ENCODE measurements at regions of chr7 and their contacts with region 1.

Region 1: GRCh38 chr7:100478966-100479665 is at the start of gene TSC22D4:
- DNase-seq: peak; percentile 97
- H3K4me3 ChIP-seq: peak within 1 kb of the TSS; percentile 71 to 99
- H3K27ac ChIP-seq: peak within 1 kb of the TSS; percentile 76 to 78
- H3K4me1 ChIP-seq: peaks cover 16 to 27% of the 10 kb centered on the region in 2 experiments; a peak in 3 of 4 replicates
- H3K27me3 ChIP-seq: no peaks in the 10 kb centered on the region
- CTCF ChIP-seq: no peak
- EP300 ChIP-seq: peak in 1 of 2 experiments; percentile 25; a peak in 1 of 4 replicates
- RAD21 ChIP-seq: no peak
- polyA plus RNA-seq, gene TSC22D4: 20.3 and 32.7 TPM in 2 replicates

Region 2: DNA sequence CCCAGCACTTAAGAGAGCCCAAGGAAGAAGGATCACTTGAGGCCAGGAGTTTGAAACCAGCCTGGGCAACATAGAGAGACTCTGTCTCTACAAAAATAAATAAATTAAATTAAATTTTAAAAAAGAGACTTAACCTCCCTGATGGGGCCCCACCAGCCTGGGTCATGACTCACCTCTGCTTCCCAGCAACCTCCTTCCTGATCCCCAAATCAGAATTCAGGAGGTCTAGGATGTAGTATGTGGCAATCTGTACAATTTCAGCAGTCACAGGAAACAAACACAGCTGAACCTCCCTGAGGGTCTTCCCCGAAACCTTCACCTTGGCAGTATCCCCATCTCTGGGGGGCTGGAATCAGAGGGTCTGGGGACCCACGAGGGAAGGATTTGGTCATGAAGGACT is 33.1 kb before region 1 on chr7:
- CTCF ChIA-PET with region 1: interaction called, 21 read pairs
- POLR2A ChIA-PET with region 1: no interaction called
- DNase-seq: no peak
- H3K4me3 ChIP-seq: no peak overlapping the region
- H3K27ac ChIP-seq: peak overlapping the region in 1 of 2 experiments; percentile 36; a peak in 2 of 4 replicates
- H3K4me1 ChIP-seq: peaks cover 2 to 4% of the 10 kb centered on the region in 2 experiments; a peak in 2 of 4 replicates
- H3K27me3 ChIP-seq: no peaks in the 10 kb centered on the region
- CTCF ChIP-seq: no peak
- EP300 ChIP-seq: no peak
- RAD21 ChIP-seq: no peak

Region 3: GRCh38 chr7:100489824-100490223 is 10.7 kb after region 1 on chr7:
- CTCF ChIA-PET with region 1: interaction called, 12 read pairs
- POLR2A ChIA-PET with region 1: interaction called, 7 read pairs
- DNase-seq: peak; percentile 100
- H3K4me3 ChIP-seq: no peak overlapping the region
- H3K27ac ChIP-seq: peak overlapping the region in 1 of 2 experiments; percentile 78; a peak in 2 of 4 replicates
- H3K4me1 ChIP-seq: peaks cover 3 to 32% of the 10 kb centered on the region in 2 experiments; a peak in 2 of 4 replicates
- H3K27me3 ChIP-seq: no peaks in the 10 kb centered on the region
- CTCF ChIP-seq: no peak
- EP300 ChIP-seq: peak in 1 of 2 experiments; percentile 17; a peak in 1 of 4 replicates
- RAD21 ChIP-seq: 0 out of 2 replicates have a peak, but pooled peaks have one; percentile 14

Region 4: DNA sequence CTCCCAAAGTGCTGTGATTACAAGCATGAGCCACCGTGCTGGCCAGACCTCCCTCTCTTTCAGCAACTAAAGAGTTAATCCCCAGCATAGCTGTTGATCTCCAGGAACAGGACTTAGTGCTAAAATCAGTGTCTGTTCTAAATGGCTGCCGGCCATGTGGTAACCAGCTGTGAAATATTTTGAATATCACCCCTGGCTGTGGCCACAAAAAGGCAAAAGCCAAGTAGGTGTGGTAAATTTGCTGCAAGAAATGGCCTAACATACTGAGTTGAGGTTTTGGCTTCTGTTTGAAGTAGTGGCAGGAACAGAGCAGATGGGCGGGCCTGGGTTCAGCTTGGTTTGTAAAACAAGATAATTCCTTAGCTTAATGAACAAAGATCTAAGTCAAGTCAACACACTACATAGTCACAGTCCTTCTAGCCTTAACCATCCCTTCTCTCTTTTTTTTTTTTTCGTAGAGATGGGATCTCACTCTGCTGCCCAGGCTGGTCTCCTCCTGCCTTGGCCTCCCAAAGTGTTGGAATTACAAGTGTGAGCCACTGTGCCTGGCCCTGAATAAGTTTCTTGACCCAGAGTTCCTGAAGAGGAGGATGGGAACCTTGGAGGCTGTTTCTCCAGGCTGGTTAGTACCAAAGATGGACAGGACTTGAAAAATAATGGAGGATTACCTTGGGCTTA is 37.2 kb after region 1 on chr7:
- CTCF ChIA-PET with region 1: interaction called, 17 read pairs
- POLR2A ChIA-PET with region 1: no interaction called
- DNase-seq: peak; percentile 79
- H3K4me3 ChIP-seq: no peak overlapping the region
- H3K27ac ChIP-seq: peak overlapping the region in 1 of 2 experiments; percentile 36; a peak in 2 of 4 replicates
- H3K4me1 ChIP-seq: peaks cover 12 to 18% of the 10 kb centered on the region in 2 experiments; a peak in 3 of 4 replicates
- H3K27me3 ChIP-seq: no peaks in the 10 kb centered on the region
- CTCF ChIP-seq: no peak
- EP300 ChIP-seq: no peak
- RAD21 ChIP-seq: no peak

Region 5: DNA sequence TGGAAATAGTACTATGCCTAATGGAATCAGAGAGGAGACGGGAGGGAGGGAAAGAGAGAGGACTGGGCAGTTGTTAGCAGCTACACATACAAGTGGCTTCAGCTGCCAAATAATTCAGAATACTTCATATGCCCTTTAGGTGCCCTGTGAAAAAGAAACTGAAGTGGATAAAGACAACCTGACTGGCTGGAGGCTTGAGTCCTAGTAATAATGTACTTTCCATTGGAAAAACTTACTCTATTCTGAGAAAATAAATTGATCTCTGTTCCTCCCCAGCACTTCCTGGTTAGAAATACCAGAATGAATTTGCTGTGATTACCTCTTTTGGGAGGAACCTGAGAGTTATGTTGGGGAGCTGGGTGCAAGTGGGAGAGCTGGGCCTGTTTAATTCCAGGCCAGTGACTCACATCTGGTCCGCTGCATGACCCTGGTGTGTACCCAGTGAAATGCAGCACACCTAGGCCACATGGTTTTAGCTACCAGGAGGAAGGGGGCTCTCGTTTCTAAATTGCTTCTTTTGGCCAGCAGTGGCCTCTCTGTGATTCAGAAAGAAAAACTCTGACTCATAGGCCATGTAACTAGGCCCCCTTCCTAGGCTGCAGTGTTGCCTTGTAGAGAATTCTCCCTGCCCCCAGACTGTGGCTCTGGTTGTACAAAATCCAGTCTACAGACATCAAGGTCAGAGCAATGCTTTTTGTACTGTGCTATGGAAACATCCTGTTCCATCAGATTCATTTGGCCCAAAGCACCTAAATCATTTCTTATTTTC is 66.4 kb after region 1 on chr7:
- CTCF ChIA-PET with region 1: interaction called, 56 read pairs
- POLR2A ChIA-PET with region 1: no interaction called
- DNase-seq: peak; percentile 74
- H3K4me3 ChIP-seq: peak overlapping the region in 1 of 2 experiments; percentile 18; a peak in 1 of 4 replicates
- H3K27ac ChIP-seq: peak overlapping the region; percentile 89
- H3K4me1 ChIP-seq: peaks cover 40 to 41% of the 10 kb centered on the region in 2 experiments
- H3K27me3 ChIP-seq: no peaks in the 10 kb centered on the region
- CTCF ChIP-seq: peak; percentile 42
- EP300 ChIP-seq: peak in 1 of 2 experiments; percentile 79; a peak in 1 of 4 replicates
- RAD21 ChIP-seq: peak; percentile 1; the same call in 1 of the 2 replicates

Region 6: GRCh38 chr7:100586266-100587025 is 107.3 kb after region 1 on chr7 and contains the start of gene FBXO24:
- CTCF ChIA-PET with region 1: interaction called, 10 read pairs
- POLR2A ChIA-PET with region 1: interaction called, 11 read pairs
- DNase-seq: peak; percentile 100
- H3K4me3 ChIP-seq: peak within 1 kb of the TSS; percentile 83 to 92
- H3K27ac ChIP-seq: peak within 1 kb of the TSS; percentile 77 to 94
- H3K4me1 ChIP-seq: peaks cover 6 to 15% of the 10 kb centered on the region in 2 experiments; a peak in 2 of 4 replicates
- H3K27me3 ChIP-seq: no peaks in the 10 kb centered on the region
- CTCF ChIP-seq: no peak
- EP300 ChIP-seq: no peak; a peak in 1 of 4 replicates
- RAD21 ChIP-seq: no peak
- polyA plus RNA-seq, gene FBXO24: 0.71 and 0.94 TPM in 2 replicates

Measured in SK-N-SH (cell line).